Lower leg skin (tissue), 4 donors: ENCODE measurements at regions of chr1 and their contacts with region 1.

Region 1: GRCh38 chr1:178310685-178311105 is 186.1 kb downstream of the CLEC20A start:
- DNase-seq: no peak
- H3K4me3 ChIP-seq: no peak overlapping the region
- CTCF ChIP-seq: no peak
- POLR2A ChIP-seq: no peak

Region 2: GRCh38 chr1:178513278-178514022 is 202.8 kb after region 1 on chr1:
- intact Hi-C with region 1: loop called (anchors 10 kb)
- DNase-seq: no peak
- H3K4me3 ChIP-seq: no peak overlapping the region
- CTCF ChIP-seq: no peak
- POLR2A ChIP-seq: no peak

Region 3: DNA sequence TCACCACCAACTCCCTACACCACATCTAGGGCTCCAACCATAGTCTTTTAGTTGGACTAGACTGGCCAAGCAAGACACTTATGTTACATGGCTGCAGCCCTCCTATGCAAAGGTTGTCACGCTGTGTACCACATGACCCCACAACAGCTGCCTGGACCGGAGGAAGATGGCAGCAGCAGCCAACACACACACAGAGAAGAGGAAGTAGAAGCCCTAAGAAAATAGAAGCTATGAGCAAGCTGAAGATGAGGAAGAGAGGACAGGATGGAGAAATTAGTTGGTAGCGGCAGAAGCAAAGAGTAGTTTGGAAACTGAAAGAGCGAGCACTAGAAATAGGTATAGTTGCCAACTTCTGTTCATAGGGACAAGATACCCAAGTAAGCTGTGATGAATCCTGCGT is 353.6 kb after region 1 on chr1:
- intact Hi-C with region 1: no loop called
- DNase-seq: no peak
- H3K4me3 ChIP-seq: no peak overlapping the region
- CTCF ChIP-seq: no peak
- POLR2A ChIP-seq: no peak